SK-N-SH (cell line): ENCODE measurements at regions of chr1 and their contacts with region 1.

Region 1: GRCh38 chr1:178189814-178190213 is 95.9 kb downstream of the RASAL2 start:
- DNase-seq: peak; percentile 57
- H3K4me3 ChIP-seq: no peak overlapping the region
- H3K27ac ChIP-seq: no peak overlapping the region
- H3K4me1 ChIP-seq: no peaks in the 10 kb centered on the region; a peak in 1 of 4 replicates
- H3K27me3 ChIP-seq: no peaks in the 10 kb centered on the region
- CTCF ChIP-seq: peak; percentile 61
- EP300 ChIP-seq: no peak
- RAD21 ChIP-seq: peak; percentile 82

Region 2: GRCh38 chr1:178055779-178056471 is 133.9 kb before region 1 on chr1:
- CTCF ChIA-PET with region 1: interaction called, 15 read pairs
- POLR2A ChIA-PET with region 1: no interaction called
- DNase-seq: no peak
- H3K4me3 ChIP-seq: no peak overlapping the region
- H3K27ac ChIP-seq: no peak overlapping the region
- H3K4me1 ChIP-seq: peaks cover 10 to 30% of the 10 kb centered on the region in 2 experiments; a peak in 3 of 4 replicates
- H3K27me3 ChIP-seq: no peaks in the 10 kb centered on the region
- CTCF ChIP-seq: no peak
- EP300 ChIP-seq: no peak
- RAD21 ChIP-seq: no peak

Region 3: GRCh38 chr1:178258536-178258935 is 68.7 kb after region 1 on chr1:
- CTCF ChIA-PET with region 1: no interaction called
- POLR2A ChIA-PET with region 1: no interaction called
- DNase-seq: no peak
- H3K4me3 ChIP-seq: no peak overlapping the region
- H3K27ac ChIP-seq: 0 out of 4 replicates have a peak overlapping the region, but pooled peaks of 1 of the 2 experiments have one; percentile 28
- H3K4me1 ChIP-seq: peaks cover 0 to 13% of the 10 kb centered on the region in 2 experiments; a peak in 2 of 4 replicates
- H3K27me3 ChIP-seq: no peaks in the 10 kb centered on the region
- CTCF ChIP-seq: no peak
- EP300 ChIP-seq: no peak
- RAD21 ChIP-seq: no peak